Aorta (tissue), 5 donors: ENCODE measurements at regions of chr11 and their contacts with region 1.

Region 1: GRCh38 chr11:81644239-81644840 is 1089.3 kb downstream of the FAM181B start:
- DNase-seq: no peak
- ATAC-seq: peak; percentile 72
- H3K4me3 ChIP-seq: no peak overlapping the region
- H3K27ac ChIP-seq: no peak overlapping the region
- H3K4me1 ChIP-seq: peaks cover 0 to 1% of the 10 kb centered on the region in 2 donors
- H3K27me3 ChIP-seq: no peaks in the 10 kb centered on the region

Region 2: DNA sequence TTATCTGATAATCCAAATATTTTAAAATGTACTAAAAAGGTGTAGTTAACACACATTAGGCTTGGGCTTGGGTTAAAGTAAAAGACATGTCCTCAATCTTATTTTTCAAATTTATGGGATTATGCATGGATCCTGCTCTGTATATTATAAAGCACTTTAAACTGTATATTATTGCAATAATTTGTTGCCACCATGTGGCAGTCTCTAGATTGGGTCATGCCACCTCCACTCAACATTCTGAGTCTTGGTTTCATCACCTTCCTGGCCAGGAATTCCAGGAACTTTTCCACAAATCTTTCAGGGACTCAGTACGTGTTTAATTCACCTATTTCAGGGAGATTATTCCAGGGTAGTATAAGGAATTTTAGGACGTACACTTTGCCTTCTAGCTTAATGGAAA is 393.8 kb after region 1 on chr11:
- intact Hi-C with region 1: loop called in 1 of 2 experiments (anchors 10 kb)
- DNase-seq: no peak
- ATAC-seq: no peak
- H3K4me3 ChIP-seq: no peak overlapping the region
- H3K27ac ChIP-seq: no peak overlapping the region
- H3K4me1 ChIP-seq: no peaks in the 10 kb centered on the region
- H3K27me3 ChIP-seq: no peaks in the 10 kb centered on the region

Region 3: DNA sequence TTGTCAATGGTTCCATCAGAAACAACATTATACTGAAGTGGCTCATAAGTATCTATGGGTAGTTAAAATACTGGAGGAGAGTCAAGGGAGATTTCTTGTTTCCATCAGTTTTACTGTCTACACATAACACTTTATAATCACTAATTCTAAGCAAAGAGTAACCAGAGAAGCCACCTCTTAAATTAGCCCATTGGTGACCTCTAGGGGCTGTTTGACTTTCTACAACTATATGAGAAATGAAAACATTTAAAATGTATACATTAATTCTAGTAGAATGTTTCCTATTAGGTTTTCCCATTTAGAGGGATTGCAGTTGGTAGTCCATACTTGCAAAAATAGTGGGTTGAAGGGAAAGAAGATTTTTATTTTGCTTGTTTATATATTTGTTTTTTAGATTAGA is 585.0 kb after region 1 on chr11:
- intact Hi-C with region 1: loop called (anchors 10 kb)
- DNase-seq: no peak
- ATAC-seq: no peak
- H3K4me3 ChIP-seq: no peak overlapping the region
- H3K27ac ChIP-seq: no peak overlapping the region
- H3K4me1 ChIP-seq: no peaks in the 10 kb centered on the region
- H3K27me3 ChIP-seq: no peaks in the 10 kb centered on the region